Esophagus muscularis mucosa (tissue), 4 donors: ENCODE measurements at regions of chr4 and their contacts with region 1.

Region 1: GRCh38 chr4:80072744-80073472 is at the start of gene ANTXR2:
- DNase-seq: peak; percentile 96
- H3K4me3 ChIP-seq: peak within 1 kb of the TSS; percentile 81 to 94 (median 90)
- H3K27ac ChIP-seq: peak within 1 kb of the TSS; percentile 92 to 95 (median 95)
- H3K4me1 ChIP-seq: peaks cover 24 to 56% (median 46%) of the 10 kb centered on the region in 4 donors
- H3K27me3 ChIP-seq: no peaks in the 10 kb centered on the region
- CTCF ChIP-seq: peak in 2 of 3 experiments; percentile 25 to 26
- EP300 ChIP-seq: no peak
- POLR2A ChIP-seq: no peak
- total RNA-seq, gene ANTXR2: 319 to 518 (median 329) TPM

Region 2: DNA sequence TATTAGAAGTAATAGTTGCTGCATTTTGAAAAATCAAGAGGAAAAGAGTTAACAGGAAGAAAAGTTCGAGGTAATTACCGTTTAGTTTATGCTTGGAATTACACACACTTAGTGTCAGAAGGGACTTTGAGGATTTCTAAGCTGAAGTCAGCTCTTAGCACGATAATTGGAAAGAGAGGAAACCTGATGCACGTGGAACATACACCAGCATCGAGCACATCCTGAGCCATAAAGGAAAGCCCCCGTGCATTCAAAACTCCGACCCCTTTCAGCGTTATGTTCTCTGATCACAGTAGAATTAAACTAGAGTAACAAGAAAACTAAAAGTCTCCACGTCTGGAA is 1133.3 kb before region 1 on chr4:
- intact Hi-C with region 1: loop called (anchors 5 kb)
- DNase-seq: no peak
- H3K4me3 ChIP-seq: peak overlapping the region; percentile 72 to 98 (median 86)
- H3K27ac ChIP-seq: peak overlapping the region; percentile 85 to 91 (median 89)
- H3K4me1 ChIP-seq: peaks cover 13 to 47% (median 43%) of the 10 kb centered on the region in 4 donors
- H3K27me3 ChIP-seq: no peaks in the 10 kb centered on the region
- CTCF ChIP-seq: no peak
- EP300 ChIP-seq: no peak
- POLR2A ChIP-seq: no peak

Region 3: DNA sequence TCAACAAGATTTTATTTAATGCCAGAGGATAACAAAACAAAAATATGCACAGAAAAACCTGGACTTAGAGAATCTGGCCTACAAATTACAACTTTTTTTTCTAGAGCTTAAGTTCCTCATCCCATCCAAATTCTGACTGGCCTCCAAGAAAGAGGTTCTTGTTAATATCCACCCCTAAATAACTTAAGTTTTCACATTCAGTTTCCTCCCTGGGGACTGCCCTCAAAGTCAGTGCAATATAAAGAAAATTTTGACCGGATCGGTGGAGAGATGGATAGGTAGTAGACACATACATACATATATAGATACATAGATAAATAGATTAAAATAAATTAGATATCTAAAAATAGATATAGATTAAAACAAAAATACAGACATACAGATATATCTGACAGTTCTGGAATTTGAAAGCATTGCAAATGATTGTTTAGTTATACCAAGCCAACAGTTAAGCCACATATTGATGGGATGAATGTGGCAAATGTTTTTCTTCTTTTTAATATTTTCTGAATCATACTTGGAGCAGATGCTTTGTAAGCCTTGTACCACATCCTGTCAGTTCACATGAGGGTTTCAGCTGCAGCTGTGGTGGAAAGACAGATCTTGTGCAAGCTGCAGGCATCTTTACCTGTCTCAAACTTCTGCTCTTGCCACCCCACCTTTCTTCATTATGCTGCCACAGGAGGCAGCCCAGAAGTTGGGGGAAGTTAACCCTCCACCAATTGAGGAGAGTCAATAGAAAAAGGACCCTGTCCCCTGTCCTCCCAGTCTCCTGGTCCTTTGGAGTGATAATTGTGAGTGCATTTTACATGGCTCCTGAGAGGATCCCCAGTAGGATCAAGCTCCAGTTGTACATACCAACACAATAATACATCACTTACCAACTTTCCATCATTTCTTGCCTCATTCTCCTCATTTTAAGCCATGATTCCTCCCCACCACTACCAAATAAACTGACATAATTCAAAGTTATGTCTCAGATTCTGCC is 65.9 kb after region 1 on chr4:
- intact Hi-C with region 1: no loop called
- DNase-seq: no peak
- H3K4me3 ChIP-seq: no peak overlapping the region
- H3K27ac ChIP-seq: no peak overlapping the region
- H3K4me1 ChIP-seq: no peaks in the 10 kb centered on the region
- H3K27me3 ChIP-seq: no peaks in the 10 kb centered on the region
- CTCF ChIP-seq: no peak
- EP300 ChIP-seq: no peak
- POLR2A ChIP-seq: no peak

Region 4: DNA sequence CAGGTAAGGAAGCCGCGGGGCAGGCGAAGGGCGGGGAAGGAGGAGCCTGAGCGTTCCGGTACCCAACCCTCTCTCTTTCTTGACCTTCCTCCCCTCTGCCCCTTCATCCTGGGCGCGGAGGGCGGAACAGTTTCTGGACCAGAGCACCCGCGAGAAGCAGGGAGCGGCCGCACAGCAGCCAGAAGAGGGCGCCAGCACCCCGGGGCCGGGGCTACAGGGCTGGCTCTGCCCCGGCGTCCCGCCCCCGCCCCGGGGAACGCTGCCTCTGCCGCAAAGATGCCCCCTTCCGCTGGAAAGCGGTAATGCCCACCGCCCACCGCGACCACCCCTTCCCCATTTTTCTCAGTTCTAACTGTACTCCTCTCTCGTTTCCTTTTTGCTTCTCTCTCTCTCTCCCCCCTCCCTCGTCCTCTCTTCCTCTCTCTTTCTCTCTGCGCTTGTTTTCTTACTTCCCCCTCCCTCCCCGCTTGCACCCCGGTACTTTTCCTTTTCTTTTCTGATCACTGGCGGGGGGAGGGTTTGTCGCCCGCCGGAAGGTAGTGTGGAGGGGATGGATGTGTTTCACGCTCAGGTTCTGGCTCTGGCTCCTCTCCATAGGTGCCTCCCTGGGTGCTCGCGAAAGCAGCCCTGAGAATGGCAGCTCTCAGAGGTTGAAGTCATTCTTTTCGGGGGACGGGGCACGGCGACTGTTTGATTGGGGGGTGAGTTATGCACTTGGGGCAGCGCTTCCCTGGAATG is 111.3 kb after region 1 on chr4:
- intact Hi-C with region 1: loop called (anchors 5 kb)
- DNase-seq: no peak
- H3K4me3 ChIP-seq: peak overlapping the region; percentile 73 to 97 (median 85)
- H3K27ac ChIP-seq: peak overlapping the region; percentile 86 to 93 (median 88)
- H3K4me1 ChIP-seq: peaks cover 32 to 56% (median 47%) of the 10 kb centered on the region in 4 donors
- H3K27me3 ChIP-seq: no peaks in the 10 kb centered on the region
- CTCF ChIP-seq: peak; percentile 88 to 96 (median 90)
- EP300 ChIP-seq: no peak
- POLR2A ChIP-seq: no peak